PC-9 (cell line): ENCODE measurements at regions of chr3 and their contacts with region 1.

Region 1: DNA sequence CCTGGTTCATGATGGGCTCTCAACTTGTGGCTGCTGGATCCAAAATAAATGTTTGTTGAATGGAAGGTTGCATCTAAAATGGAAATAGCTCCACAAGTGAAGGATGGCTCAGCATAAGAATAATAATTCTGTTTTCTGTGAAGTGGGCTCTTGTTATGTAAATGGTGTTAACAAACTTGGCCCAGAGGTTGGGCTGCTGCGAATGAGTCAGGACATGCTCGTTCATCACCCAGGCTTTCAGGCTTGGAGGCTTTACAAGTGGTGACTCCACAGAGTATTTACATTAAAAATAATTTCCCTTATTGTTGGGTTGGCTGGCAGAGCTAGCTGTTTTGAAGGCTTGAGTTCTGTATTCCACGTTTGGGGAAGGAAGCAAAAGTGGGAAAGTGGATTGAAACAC is 60.5 kb downstream of the ITGB5 start:
- DNase-seq: no peak
- H3K4me3 ChIP-seq: no peak overlapping the region
- H3K27ac ChIP-seq: peak overlapping the region; percentile 5; the same call in 1 of the 2 replicates
- H3K4me1 ChIP-seq: peaks cover 43% of the 10 kb centered on the region
- H3K27me3 ChIP-seq: no peaks in the 10 kb centered on the region
- CTCF ChIP-seq: no peak

Region 2: GRCh38 chr3:124246096-124246775 is 580.5 kb before region 1 on chr3:
- CTCF ChIA-PET with region 1: no interaction called
- POLR2A ChIA-PET with region 1: interaction called, 18 read pairs
- intact Hi-C with region 1: no loop called
- DNase-seq: no peak
- H3K4me3 ChIP-seq: no peak overlapping the region
- H3K27ac ChIP-seq: no peak overlapping the region
- H3K4me1 ChIP-seq: no peaks in the 10 kb centered on the region
- H3K27me3 ChIP-seq: peaks cover 23% of the 10 kb centered on the region; the same call in 1 of the 2 replicates
- CTCF ChIP-seq: no peak

Region 3: GRCh38 chr3:124634210-124635168 is 192.2 kb before region 1 on chr3:
- CTCF ChIA-PET with region 1: no interaction called
- POLR2A ChIA-PET with region 1: no interaction called
- intact Hi-C with region 1: loop called (anchors 5 kb)
- DNase-seq: no peak
- H3K4me3 ChIP-seq: no peak overlapping the region
- H3K27ac ChIP-seq: no peak overlapping the region
- H3K4me1 ChIP-seq: peaks cover 8% of the 10 kb centered on the region; the same call in 1 of the 2 replicates
- H3K27me3 ChIP-seq: no peaks in the 10 kb centered on the region
- CTCF ChIP-seq: no peak